Heart right ventricle (tissue), 16 donors: ENCODE measurements at regions of chr20 and their contacts with region 1.

Region 1: GRCh38 chr20:41693136-41693979 is 75.2 kb upstream of the CHD6 start:
- DNase-seq: peak; percentile 74 to 82
- ATAC-seq: peak; percentile 94 to 98 (median 96)
- H3K4me3 ChIP-seq: peak overlapping the region; percentile 62 to 95 (median 82)
- H3K27ac ChIP-seq: peak overlapping the region; percentile 81 to 99 (median 93)
- H3K4me1 ChIP-seq: peaks cover 0 to 16% (median 6%) of the 10 kb centered on the region in 9 donors
- H3K27me3 ChIP-seq: peaks cover 0 to 5% (median 0%) of the 10 kb centered on the region in 7 donors
- CTCF ChIP-seq: peak in 8 of 9 donors; percentile 34 to 79 (median 60)

Region 2: DNA sequence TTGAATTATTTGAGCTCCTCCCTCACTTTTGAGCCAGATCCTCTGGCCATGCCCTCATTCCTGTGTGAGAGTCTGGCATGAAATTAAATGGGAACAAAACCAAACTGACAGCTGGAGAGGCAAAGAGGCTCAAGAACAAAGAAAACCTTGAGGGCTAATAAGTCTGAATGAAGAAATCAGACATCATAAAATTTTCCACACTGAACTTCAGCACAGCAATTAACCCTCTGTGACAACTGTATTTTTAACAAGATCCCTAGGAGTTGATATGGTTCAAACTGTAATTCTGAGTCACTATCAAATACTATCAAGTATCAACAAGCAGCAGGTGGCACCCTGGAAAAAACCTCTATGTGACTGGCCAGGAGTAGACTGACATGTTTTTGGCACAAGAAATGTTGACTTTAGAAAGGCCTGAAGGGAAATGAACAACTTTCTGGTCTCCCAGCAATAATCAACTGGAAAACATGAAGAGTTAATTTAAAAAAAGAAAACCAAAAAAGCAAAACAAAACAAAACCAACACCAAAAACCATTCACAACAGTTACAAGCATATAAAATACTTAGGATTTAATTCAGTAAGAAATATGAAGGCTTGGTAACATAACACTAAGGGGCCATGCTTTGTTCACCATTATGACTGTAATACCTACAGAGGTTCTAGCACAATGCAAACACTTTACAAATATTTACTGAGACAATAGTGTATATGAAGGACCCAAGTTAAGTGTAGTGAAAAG is 217.2 kb before region 1 on chr20:
- intact Hi-C with region 1: loop called in 1 of 10 experiments (anchors 10 kb)
- DNase-seq: peak in 1 of 2 donors; percentile 30
- ATAC-seq: peak; percentile 72 to 84 (median 79)
- H3K4me3 ChIP-seq: no peak overlapping the region
- H3K27ac ChIP-seq: peak overlapping the region in 8 of 10 donors; percentile 2 to 65 (median 32)
- H3K4me1 ChIP-seq: peaks cover 0 to 33% (median 22%) of the 10 kb centered on the region in 9 donors
- H3K27me3 ChIP-seq: no peaks in the 10 kb centered on the region
- CTCF ChIP-seq: no peak

Region 3: GRCh38 chr20:41509316-41510200 is 183.8 kb before region 1 on chr20:
- intact Hi-C with region 1: loop called in 2 of 10 experiments (anchors 10 kb)
- DNase-seq: peak; percentile 31 to 49
- ATAC-seq: peak; percentile 48 to 87 (median 76)
- H3K4me3 ChIP-seq: no peak overlapping the region
- H3K27ac ChIP-seq: peak overlapping the region in 9 of 10 donors; percentile 2 to 73 (median 54)
- H3K4me1 ChIP-seq: peaks cover 5 to 72% (median 47%) of the 10 kb centered on the region in 9 donors
- H3K27me3 ChIP-seq: no peaks in the 10 kb centered on the region
- CTCF ChIP-seq: no peak

Region 4: GRCh38 chr20:41524980-41525613 is 168.3 kb before region 1 on chr20:
- intact Hi-C with region 1: loop called in 2 of 10 experiments (anchors 5 to 10 kb)
- DNase-seq: peak; percentile 75 to 86
- ATAC-seq: peak; percentile 78 to 97 (median 94)
- H3K4me3 ChIP-seq: peak overlapping the region in 5 of 10 donors; percentile 5 to 28 (median 14)
- H3K27ac ChIP-seq: peak overlapping the region in 5 of 10 donors; percentile 17 to 49 (median 26)
- H3K4me1 ChIP-seq: peaks cover 0 to 40% (median 33%) of the 10 kb centered on the region in 9 donors
- H3K27me3 ChIP-seq: no peaks in the 10 kb centered on the region
- CTCF ChIP-seq: no peak

Region 5: GRCh38 chr20:41746634-41747033 is 53.3 kb after region 1 on chr20:
- intact Hi-C with region 1: no loop called
- DNase-seq: no peak
- ATAC-seq: no peak
- H3K4me3 ChIP-seq: no peak overlapping the region
- H3K27ac ChIP-seq: no peak overlapping the region
- H3K4me1 ChIP-seq: no peaks in the 10 kb centered on the region
- H3K27me3 ChIP-seq: peaks cover 0 to 10% (median 5%) of the 10 kb centered on the region in 7 donors
- CTCF ChIP-seq: no peak

Region 6: GRCh38 chr20:41984031-41984430 is 290.7 kb after region 1 on chr20:
- intact Hi-C with region 1: no loop called
- DNase-seq: no peak
- ATAC-seq: no peak
- H3K4me3 ChIP-seq: no peak overlapping the region
- H3K27ac ChIP-seq: no peak overlapping the region
- H3K4me1 ChIP-seq: no peaks in the 10 kb centered on the region
- H3K27me3 ChIP-seq: peaks cover 0 to 5% (median 0%) of the 10 kb centered on the region in 7 donors
- CTCF ChIP-seq: no peak